Mammary epithelial cell (primary cell): ENCODE measurements at regions of chr10 and their contacts with region 1.

Region 1: GRCh38 chr10:97210543-97210961 is 24.8 kb upstream of the SLIT1 start:
- DNase-seq: peak; percentile 40
- H3K4me3 ChIP-seq: no peak overlapping the region
- H3K27ac ChIP-seq: no peak overlapping the region
- H3K4me1 ChIP-seq: no peaks in the 10 kb centered on the region
- H3K27me3 ChIP-seq: no peaks in the 10 kb centered on the region
- CTCF ChIP-seq: peak; percentile 94 to 97

Region 2: DNA sequence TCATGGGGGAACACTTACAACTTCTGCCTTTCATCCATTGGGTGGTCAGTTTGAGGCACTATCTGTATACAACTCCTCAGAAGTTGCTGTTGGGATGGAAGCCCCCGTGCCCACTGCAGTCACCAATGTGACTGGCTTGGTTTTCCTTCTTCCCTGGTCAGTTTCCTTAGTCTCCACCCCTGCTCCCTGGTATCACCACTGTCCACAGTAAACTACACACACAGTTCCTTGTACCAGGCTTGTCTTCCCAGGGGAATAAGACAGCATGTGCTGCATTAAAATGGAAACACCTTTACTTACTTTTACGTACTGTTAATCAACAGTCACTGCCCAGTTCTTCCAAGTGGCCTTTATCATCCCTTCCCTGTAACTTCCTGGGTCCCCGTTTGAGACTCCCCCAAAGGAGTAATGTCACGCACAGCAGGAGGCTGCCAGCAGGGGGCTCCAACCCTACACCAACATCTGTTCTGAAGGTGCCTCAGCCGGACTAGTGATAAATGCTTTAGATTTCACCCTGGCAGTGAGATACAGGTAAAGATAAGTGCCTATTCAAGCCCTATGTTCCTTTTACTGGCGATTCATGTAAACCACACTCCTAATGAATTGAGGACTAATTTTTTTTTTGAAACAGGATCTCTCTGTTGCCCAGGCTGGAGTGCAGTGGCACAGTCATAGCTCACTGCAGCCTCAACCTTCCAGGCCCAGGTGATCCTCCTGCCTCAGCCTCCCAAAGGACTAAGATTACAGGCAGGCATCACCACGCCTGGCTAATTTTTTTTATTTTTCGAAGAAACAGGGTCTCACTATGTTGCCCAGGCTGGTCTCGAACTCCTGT is 444.9 kb before region 1 on chr10:
- CTCF ChIA-PET with region 1: no interaction called
- dilution Hi-C with region 1: no loop called
- in situ Hi-C with region 1: no loop called
- intact Hi-C with region 1: loop called (anchors 10 kb)
- DNase-seq: peak; percentile 47
- H3K4me3 ChIP-seq: no peak overlapping the region
- H3K27ac ChIP-seq: no peak overlapping the region
- H3K4me1 ChIP-seq: no peaks in the 10 kb centered on the region
- H3K27me3 ChIP-seq: no peaks in the 10 kb centered on the region
- CTCF ChIP-seq: peak; percentile 86 to 91

Region 3: DNA sequence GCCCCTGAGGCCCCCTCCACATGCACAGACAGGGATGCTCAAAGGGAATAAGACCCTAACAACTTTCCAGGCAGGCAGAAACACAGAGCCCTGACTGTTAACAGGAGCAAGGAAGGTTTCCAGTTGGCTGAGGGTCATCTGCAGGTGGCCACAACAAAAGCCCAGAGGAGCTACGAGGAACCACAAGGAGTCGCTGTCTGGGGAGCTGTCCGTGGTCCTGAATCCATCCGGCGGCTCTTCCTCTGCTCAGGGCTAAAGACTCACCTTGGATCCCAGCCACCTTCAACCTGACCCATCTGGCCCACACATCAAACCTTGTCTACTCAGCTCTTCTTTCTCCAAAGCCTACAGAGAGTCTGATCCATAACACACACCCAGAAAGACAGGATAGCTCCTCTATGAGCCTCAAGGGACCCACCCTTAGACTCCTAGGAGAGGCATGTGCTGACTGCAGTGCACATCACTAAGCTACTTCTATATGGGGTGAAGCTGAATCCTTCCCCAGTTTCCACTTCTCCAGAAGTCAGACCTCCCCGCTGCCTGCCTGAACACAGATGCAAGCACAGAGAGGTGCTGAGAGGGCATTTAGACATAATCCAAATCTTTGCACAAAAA is 128.8 kb before region 1 on chr10:
- CTCF ChIA-PET with region 1: interaction called, 17 read pairs
- dilution Hi-C with region 1: no loop called
- in situ Hi-C with region 1: loop called in 1 of 2 experiments (anchors 10 kb)
- intact Hi-C with region 1: loop called (anchors 2 kb)
- DNase-seq: peak; percentile 37
- H3K4me3 ChIP-seq: no peak overlapping the region
- H3K27ac ChIP-seq: no peak overlapping the region
- H3K4me1 ChIP-seq: no peaks in the 10 kb centered on the region
- H3K27me3 ChIP-seq: peaks cover 2% of the 10 kb centered on the region
- CTCF ChIP-seq: peak; percentile 87 to 95